Dorsolateral prefrontal cortex (tissue), 120 donors: ENCODE measurements at regions of chr1 and their contacts with region 1.

Region 1: GRCh38 chr1:32107742-32108661 is at the start of gene KPNA6:
- DNase-seq: peak; percentile 81 to 93 (median 88)
- H3K4me3 ChIP-seq: peak within 1 kb of the TSS; percentile 72 to 100 (median 95)
- H3K27ac ChIP-seq: peak within 1 kb of the TSS; percentile 32 to 97 (median 89)
- H3K27me3 ChIP-seq: no peaks in the 10 kb centered on the region
- CTCF ChIP-seq: peak in 45 of 56 donors; percentile 6 to 58 (median 27)
- total RNA-seq, gene KPNA6: 49.7 to 98.8 (median 74.6) TPM

Region 2: DNA sequence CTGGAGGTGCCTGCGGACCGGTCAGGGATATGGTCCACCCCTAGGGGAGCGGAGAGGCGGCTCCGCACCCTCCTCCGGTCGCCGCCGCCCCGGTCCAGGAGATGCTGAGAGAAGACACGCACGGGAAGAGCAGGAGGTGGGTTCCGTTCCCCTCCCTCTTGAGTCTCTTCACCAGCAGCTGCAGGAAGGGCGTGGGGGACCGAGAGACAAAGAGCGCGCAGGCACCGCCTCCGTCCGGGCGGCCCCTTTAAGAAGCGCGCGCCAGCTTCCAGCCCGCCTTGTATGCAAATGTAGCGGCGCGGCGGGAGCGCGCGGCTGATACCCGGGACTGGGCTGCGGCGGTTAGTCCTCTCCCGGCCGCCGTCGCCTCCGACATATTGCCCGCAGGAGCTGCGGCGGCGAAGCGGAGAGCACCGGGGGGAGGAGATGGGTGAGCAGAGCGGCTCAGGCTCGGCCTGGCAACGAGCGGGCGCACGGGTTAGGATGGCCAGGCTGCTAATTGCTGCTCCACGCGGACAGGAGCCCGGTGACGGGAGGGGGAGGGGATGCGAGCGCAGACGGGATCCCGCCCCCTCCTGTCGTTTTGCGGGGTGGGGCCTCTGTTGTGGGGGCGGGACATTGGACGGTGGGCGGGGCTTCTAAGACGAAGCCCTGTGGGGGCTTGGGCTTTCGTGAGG is 35.2 kb before region 1 on chr1 and contains the start of gene TMEM39B:
- intact Hi-C with region 1: loop called (anchors 5 kb)
- DNase-seq: peak; percentile 92 to 97 (median 96)
- H3K4me3 ChIP-seq: peak within 1 kb of the TSS; percentile 59 to 96 (median 81)
- H3K27ac ChIP-seq: peak within 1 kb of the TSS; percentile 61 to 99 (median 96)
- H3K27me3 ChIP-seq: no peaks in the 10 kb centered on the region
- CTCF ChIP-seq: peak in 28 of 56 donors; percentile 10 to 40 (median 22)
- total RNA-seq, gene TMEM39B: 14.3 to 30.7 (median 20.7) TPM

Region 3: GRCh38 chr1:32179443-32180185 is 71.6 kb after region 1 on chr1 and contains the start of gene TXLNA:
- intact Hi-C with region 1: loop called (anchors 2 to 5 kb)
- DNase-seq: peak; percentile 89 to 97 (median 92)
- H3K4me3 ChIP-seq: peak within 1 kb of the TSS; percentile 58 to 100 (median 79)
- H3K27ac ChIP-seq: peak within 1 kb of the TSS; percentile 66 to 100 (median 97)
- H3K27me3 ChIP-seq: no peaks in the 10 kb centered on the region
- CTCF ChIP-seq: peak in 42 of 56 donors; percentile 10 to 62 (median 33)
- total RNA-seq, gene TXLNA: 22.6 to 39.3 (median 29.4) TPM

Region 4: GRCh38 chr1:32200226-32201010 is 92.4 kb after region 1 on chr1 and contains the start of gene CCDC28B:
- intact Hi-C with region 1: loop called in 1 of 2 experiments (anchors 5 kb)
- DNase-seq: peak in 9 of 10 donors; percentile 38 to 80 (median 71)
- H3K4me3 ChIP-seq: peak within 1 kb of the TSS; percentile 53 to 90 (median 75)
- H3K27ac ChIP-seq: peak within 1 kb of the TSS; percentile 1 to 93 (median 83)
- H3K27me3 ChIP-seq: no peaks in the 10 kb centered on the region
- CTCF ChIP-seq: peak in 3 of 56 donors; percentile 6 to 20 (median 9)
- total RNA-seq, gene CCDC28B: 5.1 to 21.3 (median 11.9) TPM

Region 5: GRCh38 chr1:32275424-32275823 is 167.4 kb after region 1 on chr1:
- intact Hi-C with region 1: no loop called
- DNase-seq: no peak
- H3K4me3 ChIP-seq: no peak overlapping the region
- H3K27ac ChIP-seq: no peak overlapping the region
- H3K27me3 ChIP-seq: peaks cover 0 to 34% (median 18%) of the 10 kb centered on the region in 45 donors
- CTCF ChIP-seq: no peak

Region 6: DNA sequence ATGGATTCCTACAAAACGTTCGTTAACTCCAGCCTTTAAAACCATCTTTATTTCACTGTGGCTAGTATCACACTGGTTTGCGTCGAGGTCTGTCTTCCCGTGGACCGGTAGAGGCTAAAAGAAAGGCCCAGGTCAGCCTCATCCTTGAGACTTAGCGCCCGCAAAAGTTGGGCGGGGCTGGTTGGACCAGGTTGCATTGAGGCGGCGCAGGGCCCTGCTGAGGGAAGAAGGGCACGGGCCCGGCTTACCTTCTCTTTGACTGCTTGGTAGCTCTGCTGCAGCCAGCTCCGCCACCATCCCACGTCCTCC is 285.8 kb after region 1 on chr1:
- intact Hi-C with region 1: no loop called
- DNase-seq: peak in 5 of 10 donors; percentile 28 to 51 (median 41)
- H3K4me3 ChIP-seq: peak overlapping the region; percentile 63 to 100 (median 95)
- H3K27ac ChIP-seq: peak overlapping the region in 56 of 59 donors; percentile 27 to 96 (median 90)
- H3K27me3 ChIP-seq: no peaks in the 10 kb centered on the region
- CTCF ChIP-seq: peak in 1 of 56 donors; percentile 0

Region 7: GRCh38 chr1:32426489-32427255 is 318.7 kb after region 1 on chr1:
- intact Hi-C with region 1: no loop called
- DNase-seq: peak in 2 of 10 donors; percentile 8 to 49
- H3K4me3 ChIP-seq: peak overlapping the region in 56 of 59 donors; percentile 5 to 71 (median 52)
- H3K27ac ChIP-seq: no peak overlapping the region
- H3K27me3 ChIP-seq: peaks cover 0 to 18% (median 0%) of the 10 kb centered on the region in 45 donors
- CTCF ChIP-seq: no peak

Region 8: DNA sequence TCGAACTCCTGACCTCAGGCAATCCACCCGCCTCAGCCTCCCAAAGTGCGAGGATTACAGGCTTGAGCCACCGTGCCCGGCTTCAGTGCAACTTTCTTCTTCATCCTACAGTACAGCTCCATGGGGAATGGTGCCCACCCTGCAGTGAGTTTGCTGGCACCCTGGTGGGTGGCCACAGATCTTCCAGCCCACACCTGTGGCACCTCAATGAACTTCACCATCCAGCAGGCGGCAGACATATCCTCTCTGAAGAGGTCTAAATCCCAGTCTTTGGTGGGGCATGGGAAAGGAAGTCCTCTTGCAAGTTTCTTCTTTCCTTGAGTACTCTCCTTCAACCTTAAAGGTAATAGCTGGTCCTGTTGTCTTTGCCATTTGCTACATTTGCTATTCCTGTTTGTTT is 413.2 kb after region 1 on chr1:
- intact Hi-C with region 1: no loop called
- DNase-seq: no peak
- H3K4me3 ChIP-seq: peak overlapping the region in 16 of 59 donors; percentile 24 to 60 (median 51)
- H3K27ac ChIP-seq: no peak overlapping the region
- H3K27me3 ChIP-seq: no peaks in the 10 kb centered on the region
- CTCF ChIP-seq: no peak